Heart right ventricle (tissue), 16 donors: ENCODE measurements at regions of chr12 and their contacts with region 1.

Region 1: DNA sequence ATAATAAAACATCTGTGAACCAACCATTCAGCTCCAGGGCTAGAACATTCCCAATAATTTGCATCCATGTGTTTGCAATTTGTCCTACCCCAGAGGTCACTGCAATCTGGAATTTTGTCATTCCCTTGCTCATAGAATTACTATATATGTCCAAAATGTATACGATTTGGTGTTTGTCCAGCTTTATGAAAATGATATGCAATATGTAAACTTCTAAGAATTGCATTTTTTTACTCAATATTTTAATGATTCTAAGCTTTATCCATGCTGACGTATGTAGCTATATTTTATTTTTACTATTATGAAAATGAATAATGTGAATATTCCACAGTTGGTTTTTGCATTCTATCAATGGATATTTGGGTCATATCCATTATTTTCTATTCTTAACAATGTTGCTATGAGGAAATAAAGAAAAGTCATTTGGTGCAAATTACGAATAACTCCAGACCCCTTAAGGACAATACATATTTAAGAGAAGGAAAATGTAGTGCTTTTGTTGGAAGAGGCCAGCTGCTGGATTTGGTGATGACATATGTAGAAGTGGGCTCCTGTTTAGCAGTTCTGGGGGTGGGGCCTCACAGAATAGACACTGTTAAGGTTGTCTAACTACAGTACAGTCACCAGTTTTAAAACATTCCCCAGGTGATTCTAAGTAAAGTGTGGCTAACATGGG is 139.4 kb downstream of the SLC38A4 start:
- DNase-seq: no peak
- ATAC-seq: no peak
- H3K4me3 ChIP-seq: no peak overlapping the region
- H3K27ac ChIP-seq: no peak overlapping the region
- H3K4me1 ChIP-seq: no peaks in the 10 kb centered on the region
- H3K27me3 ChIP-seq: no peaks in the 10 kb centered on the region
- CTCF ChIP-seq: no peak

Region 2: GRCh38 chr12:47004634-47005033 is 318.2 kb after region 1 on chr12:
- intact Hi-C with region 1: loop called in 1 of 10 experiments (anchors 10 kb)
- DNase-seq: no peak
- ATAC-seq: peak in 1 of 8 donors; percentile 51
- H3K4me3 ChIP-seq: no peak overlapping the region
- H3K27ac ChIP-seq: no peak overlapping the region
- H3K4me1 ChIP-seq: no peaks in the 10 kb centered on the region
- H3K27me3 ChIP-seq: peaks cover 0 to 11% (median 0%) of the 10 kb centered on the region in 7 donors
- CTCF ChIP-seq: no peak

Region 3: GRCh38 chr12:47014474-47014873 is 328.1 kb after region 1 on chr12:
- intact Hi-C with region 1: loop called in 3 of 10 experiments (anchors 10 kb)
- DNase-seq: no peak
- ATAC-seq: no peak
- H3K4me3 ChIP-seq: no peak overlapping the region
- H3K27ac ChIP-seq: no peak overlapping the region
- H3K4me1 ChIP-seq: no peaks in the 10 kb centered on the region
- H3K27me3 ChIP-seq: peaks cover 0 to 3% (median 0%) of the 10 kb centered on the region in 7 donors
- CTCF ChIP-seq: no peak